PC-9 (cell line): ENCODE measurements at regions of chr11 and their contacts with region 1.

Region 1: GRCh38 chr11:34749666-34750659 is 129.1 kb downstream of the EHF start:
- DNase-seq: peak; percentile 80 to 87
- H3K4me3 ChIP-seq: no peak overlapping the region
- H3K27ac ChIP-seq: peak overlapping the region; percentile 8; the same call in 1 of the 2 replicates
- H3K4me1 ChIP-seq: peaks cover 24% of the 10 kb centered on the region
- H3K27me3 ChIP-seq: no peaks in the 10 kb centered on the region
- CTCF ChIP-seq: no peak

Region 2: DNA sequence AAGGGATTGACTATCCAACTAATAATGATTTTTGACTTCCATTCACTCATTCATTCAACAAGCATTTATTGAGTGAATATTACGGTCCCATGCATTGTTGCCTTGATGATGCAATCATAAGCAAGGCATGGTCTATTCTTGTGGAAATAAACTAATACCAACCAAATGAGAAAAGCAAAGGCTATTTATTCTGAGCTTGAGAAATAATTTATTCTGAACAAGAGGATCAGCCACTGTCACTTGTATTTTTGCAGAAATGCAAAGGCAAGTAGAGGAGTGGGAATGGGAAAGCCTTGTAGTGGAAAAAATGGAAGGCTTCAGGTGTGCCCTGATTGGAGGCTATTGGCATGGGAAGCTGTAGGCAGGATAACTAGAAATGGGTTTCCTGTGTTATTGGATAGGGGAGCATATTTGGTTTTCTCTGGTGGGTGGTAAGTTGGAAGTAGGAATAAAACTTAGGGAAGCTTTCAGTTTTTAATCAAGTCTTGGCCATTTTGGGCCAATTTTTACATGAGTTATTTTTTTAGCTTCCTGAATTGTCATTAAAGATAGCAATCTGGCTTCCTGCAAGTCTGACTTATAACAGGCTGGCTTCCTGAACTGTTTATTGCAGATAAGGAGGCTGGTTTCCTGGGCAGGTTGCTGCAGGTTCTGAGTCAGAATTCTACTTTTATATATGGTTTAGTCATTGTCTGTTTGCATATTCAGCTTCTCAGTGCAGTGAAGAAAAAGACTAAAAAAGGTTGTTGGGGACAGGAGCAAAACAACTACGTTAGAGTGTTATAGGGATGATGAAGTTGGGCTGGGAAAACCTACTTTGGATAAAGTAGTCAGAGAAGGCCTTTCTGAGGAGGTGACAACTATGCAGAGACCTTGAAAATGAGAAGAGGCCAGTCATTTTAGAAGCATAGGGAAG is 59.5 kb after region 1 on chr11:
- CTCF ChIA-PET with region 1: no interaction called
- POLR2A ChIA-PET with region 1: interaction called, 10 read pairs
- intact Hi-C with region 1: no loop called
- DNase-seq: peak; percentile 22 to 84
- H3K4me3 ChIP-seq: no peak overlapping the region
- H3K27ac ChIP-seq: peak overlapping the region; percentile 58
- H3K4me1 ChIP-seq: peaks cover 19% of the 10 kb centered on the region
- H3K27me3 ChIP-seq: no peaks in the 10 kb centered on the region
- CTCF ChIP-seq: no peak